MCF 10A (cell line): ENCODE measurements at regions of chr11 and their contacts with region 1.

Region 1: DNA sequence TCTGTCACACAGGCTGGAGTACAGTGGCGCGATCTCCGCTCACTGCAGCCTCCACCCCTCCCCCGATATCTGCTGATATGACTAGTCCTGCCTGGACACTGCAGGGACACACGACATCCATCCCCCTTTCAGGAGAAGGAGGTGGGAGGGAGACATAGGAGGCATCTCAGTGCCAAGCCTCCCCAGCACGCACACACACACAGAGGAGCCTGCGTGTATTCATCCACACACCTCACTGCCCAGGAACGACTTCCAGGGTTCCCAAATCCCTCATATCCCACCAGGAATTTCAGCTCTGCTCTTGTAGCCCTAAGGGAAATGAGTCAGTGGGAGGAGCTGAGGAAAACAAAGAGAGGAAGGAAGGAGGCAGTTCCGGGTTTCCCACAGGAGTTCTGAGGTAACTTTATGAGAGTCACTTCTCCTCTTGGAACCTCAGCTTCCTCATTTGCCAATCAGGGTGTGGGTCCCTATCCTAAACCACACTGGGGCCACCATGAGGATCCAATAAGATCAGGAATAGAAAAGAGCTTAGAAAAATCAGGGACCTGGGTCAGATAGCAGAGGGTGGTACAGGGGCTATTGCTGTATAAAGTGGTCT is 37.1 kb upstream of the ACER3 start:
- DNase-seq: peak; percentile 97
- H3K4me3 Mint-ChIP-seq: peak overlapping the region; percentile 51
- H3K27ac Mint-ChIP-seq: peak overlapping the region; percentile 67
- H3K4me1 Mint-ChIP-seq: peaks cover 27% of the 10 kb centered on the region
- H3K27me3 Mint-ChIP-seq: no peaks in the 10 kb centered on the region
- CTCF ChIP-seq: no peak

Region 2: GRCh38 chr11:76835928-76836612 is 12.5 kb after region 1 on chr11:
- CTCF ChIA-PET with region 1: interaction called, 6 read pairs
- POLR2A ChIA-PET with region 1: interaction called, 27 read pairs
- intact Hi-C with region 1: no loop called
- DNase-seq: peak; percentile 94
- H3K4me3 Mint-ChIP-seq: no peak overlapping the region
- H3K27ac Mint-ChIP-seq: no peak overlapping the region
- H3K4me1 Mint-ChIP-seq: peaks cover 5% of the 10 kb centered on the region
- H3K27me3 Mint-ChIP-seq: peaks cover 2% of the 10 kb centered on the region
- CTCF ChIP-seq: no peak